ENCODE measurements at regions of chr12 and their contacts with region 1.

Region 1: DNA sequence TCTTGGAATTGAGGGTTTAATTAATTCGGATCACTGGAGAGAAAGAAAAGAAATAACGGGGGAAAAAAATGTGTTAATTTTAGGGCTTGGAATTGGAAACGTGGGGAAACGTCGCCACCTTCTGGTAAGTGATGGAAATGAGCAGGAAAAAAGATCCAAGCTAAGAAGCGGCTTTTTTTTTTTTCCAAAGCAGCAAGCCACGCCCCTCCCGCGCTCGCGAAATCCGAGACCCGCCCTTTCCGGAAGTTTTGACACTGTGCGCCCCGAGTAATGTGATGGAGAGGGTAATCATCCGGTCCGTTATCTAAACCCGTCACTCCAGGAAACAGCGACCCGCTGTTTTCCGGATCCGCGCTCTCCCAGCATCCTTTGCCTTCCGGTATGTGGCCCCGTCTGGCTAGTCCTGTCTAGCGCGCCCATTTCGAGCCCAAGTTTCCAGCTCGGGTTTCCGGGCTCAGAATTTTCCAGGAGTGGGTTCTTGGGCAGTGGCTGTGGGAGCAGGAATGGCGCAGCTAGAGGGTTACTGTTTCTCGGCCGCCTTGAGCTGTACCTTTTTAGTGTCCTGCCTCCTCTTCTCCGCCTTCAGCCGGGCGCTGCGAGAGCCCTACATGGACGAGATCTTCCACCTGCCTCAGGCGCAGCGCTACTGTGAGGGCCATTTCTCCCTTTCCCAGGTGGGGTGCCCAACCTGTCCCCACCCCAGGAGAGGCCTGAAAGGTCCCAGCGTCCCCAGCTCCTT is at the start of gene ALG10B:
- DNase-seq: peak; percentile 79
- H3K4me3 ChIP-seq: peak within 1 kb of the TSS; percentile 80 to 81
- H3K27ac ChIP-seq: peak within 1 kb of the TSS in 1 of 2 experiments; percentile 67; a peak in 3 of 4 replicates
- H3K4me1 ChIP-seq: peaks cover 0 to 3% of the 10 kb centered on the region in 2 experiments; a peak in 2 of 4 replicates
- H3K27me3 ChIP-seq: no peaks in the 10 kb centered on the region
- CTCF ChIP-seq: peak; percentile 66
- EP300 ChIP-seq: peak in 1 of 2 experiments; percentile 48; a peak in 2 of 4 replicates
- RAD21 ChIP-seq: peak; percentile 82
- polyA plus RNA-seq, gene ALG10B: 2.6 and 3.5 TPM in 2 replicates

Region 2: DNA sequence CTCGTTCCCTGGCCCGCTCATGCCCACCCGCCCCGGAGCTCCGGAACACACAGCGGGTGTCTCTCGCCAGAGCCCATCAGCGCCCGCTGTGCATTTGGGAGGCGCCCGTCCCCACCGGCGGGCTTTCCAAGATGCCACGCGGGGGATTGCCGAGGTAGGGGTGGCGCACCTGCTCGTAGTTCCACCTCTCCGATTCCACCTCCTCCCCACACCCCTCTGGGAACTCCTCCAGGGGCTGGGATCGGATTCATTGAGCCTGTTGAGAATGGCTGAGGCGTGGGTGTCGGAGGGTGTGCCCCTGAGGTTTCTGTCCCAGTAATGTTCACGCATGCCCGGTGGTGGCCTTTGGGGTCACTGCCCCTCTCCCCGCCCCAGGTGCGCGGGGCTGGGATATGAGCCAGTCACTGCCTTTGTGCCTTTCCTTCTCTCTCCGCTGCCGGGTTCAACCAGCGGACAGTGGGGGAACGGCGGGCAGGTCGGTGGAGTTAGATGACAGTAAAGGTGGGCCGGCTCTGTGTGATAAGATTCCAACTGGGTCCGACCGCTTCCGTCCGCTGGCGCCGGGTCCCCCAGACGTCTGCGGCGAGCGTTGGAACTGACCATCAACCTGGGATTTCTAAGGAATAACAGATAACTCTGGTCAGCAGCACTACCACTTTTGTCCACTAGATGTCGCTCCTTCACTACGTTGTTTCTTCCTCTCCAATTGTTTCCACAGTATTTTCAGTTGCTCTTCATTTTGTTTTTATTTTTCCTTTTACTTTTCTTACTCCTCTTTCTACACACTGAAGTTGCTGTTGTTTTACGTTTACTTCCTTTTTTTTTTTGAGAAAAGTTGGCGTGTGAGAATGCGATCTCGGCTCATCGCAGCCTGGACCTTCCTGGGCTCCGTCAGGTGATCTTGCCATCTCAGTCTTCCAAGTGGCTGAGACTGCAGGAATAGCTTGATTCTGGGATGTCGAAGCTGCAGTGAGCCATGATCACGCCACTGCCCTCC is 178.0 kb before region 1 on chr12:
- CTCF ChIA-PET with region 1: interaction called, 12 read pairs
- POLR2A ChIA-PET with region 1: interaction called, 3 read pairs
- DNase-seq: peak; percentile 72
- H3K4me3 ChIP-seq: peak overlapping the region; percentile 44 to 84
- H3K27ac ChIP-seq: no peak overlapping the region
- H3K4me1 ChIP-seq: peaks cover 0 to 4% of the 10 kb centered on the region in 2 experiments; a peak in 1 of 4 replicates
- H3K27me3 ChIP-seq: peaks cover 33% of the 10 kb centered on the region; the same call in 1 of the 2 replicates
- CTCF ChIP-seq: peak; percentile 96
- EP300 ChIP-seq: no peak
- RAD21 ChIP-seq: peak; percentile 86

Region 3: DNA sequence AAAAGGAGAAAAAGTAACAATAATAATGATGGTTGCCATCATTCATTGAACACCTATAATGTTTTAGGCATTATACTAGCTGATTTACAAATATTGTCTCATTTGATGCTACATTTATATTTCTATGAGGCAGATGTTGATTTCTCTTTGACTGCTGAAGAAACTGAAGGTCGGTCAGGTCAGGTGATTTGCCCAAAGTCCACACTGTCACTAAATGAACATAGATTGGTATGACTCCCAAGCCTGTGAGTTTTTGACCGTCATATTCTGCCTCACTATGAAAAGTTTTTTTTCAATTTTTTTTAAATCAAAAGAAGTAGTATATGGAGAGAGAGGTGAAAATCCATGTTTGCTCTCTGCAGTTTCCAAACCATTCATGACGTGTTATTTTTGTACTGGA is 10.8 kb after region 1 on chr12:
- CTCF ChIA-PET with region 1: interaction called, 11 read pairs
- POLR2A ChIA-PET with region 1: no interaction called
- DNase-seq: no peak
- H3K4me3 ChIP-seq: no peak overlapping the region
- H3K27ac ChIP-seq: no peak overlapping the region
- H3K4me1 ChIP-seq: no peaks in the 10 kb centered on the region; a peak in 1 of 4 replicates
- H3K27me3 ChIP-seq: no peaks in the 10 kb centered on the region
- CTCF ChIP-seq: no peak
- EP300 ChIP-seq: no peak
- RAD21 ChIP-seq: no peak

Region 4: GRCh38 chr12:38417101-38417500 is 100.5 kb after region 1 on chr12:
- CTCF ChIA-PET with region 1: no interaction called
- POLR2A ChIA-PET with region 1: no interaction called
- DNase-seq: no peak
- H3K4me3 ChIP-seq: no peak overlapping the region
- H3K27ac ChIP-seq: no peak overlapping the region
- H3K4me1 ChIP-seq: no peaks in the 10 kb centered on the region
- H3K27me3 ChIP-seq: no peaks in the 10 kb centered on the region
- CTCF ChIP-seq: no peak
- EP300 ChIP-seq: no peak
- RAD21 ChIP-seq: no peak

Region 5: DNA sequence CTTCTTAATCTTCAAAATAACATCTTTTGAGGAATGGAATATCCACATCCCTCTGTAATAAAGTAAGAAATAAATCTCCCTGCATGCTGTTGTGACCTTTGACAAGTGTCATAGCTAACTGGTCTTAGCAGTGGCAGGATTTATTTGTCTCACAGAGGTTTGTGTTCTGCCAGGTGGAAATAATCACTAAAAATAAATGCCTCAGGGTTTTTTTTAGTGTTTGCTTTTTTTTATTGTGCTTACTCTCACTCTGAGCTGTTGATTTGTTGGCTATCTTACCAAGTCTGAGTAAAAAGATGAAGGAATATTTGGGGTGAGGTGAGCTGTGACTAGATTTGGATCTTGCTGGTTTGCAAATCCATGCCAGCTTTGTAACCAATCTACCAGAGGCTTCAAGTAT is 285.4 kb after region 1 on chr12:
- CTCF ChIA-PET with region 1: no interaction called
- POLR2A ChIA-PET with region 1: no interaction called
- DNase-seq: no peak
- H3K4me3 ChIP-seq: no peak overlapping the region
- H3K27ac ChIP-seq: no peak overlapping the region
- H3K4me1 ChIP-seq: no peaks in the 10 kb centered on the region
- H3K27me3 ChIP-seq: no peaks in the 10 kb centered on the region
- CTCF ChIP-seq: no peak
- EP300 ChIP-seq: no peak
- RAD21 ChIP-seq: no peak

Measured in SK-N-SH (cell line).